RWPE1 (cell line): ENCODE measurements at regions of chrX and their contacts with region 1.

Region 1: DNA sequence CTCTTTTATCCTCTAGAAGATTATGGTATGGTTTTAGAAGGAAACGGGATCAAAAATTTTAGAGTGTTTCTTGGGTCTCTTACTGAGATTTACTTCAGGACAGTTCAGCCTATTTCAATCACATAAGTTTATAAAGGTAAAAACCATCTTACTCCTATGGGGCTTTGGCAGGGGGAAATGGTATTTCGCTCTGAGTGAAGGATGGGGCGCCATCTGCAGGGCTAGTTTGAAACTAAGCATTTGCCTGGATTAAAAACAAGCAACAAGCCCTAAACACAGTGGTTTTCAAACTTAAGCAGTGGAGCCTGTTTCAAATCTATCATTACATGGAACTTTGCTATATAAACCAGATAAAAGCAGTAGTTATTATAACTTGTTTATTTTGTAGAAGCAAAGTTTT is 361.5 kb upstream of the FMR1 start:
- DNase-seq: no peak
- H3K27ac ChIP-seq: no peak overlapping the region
- CTCF ChIP-seq: no peak

Region 2: GRCh38 chrX:147333821-147334220 is 216.4 kb before region 1 on chrX:
- CTCF ChIA-PET with region 1: no interaction called
- POLR2A ChIA-PET with region 1: no interaction called
- DNase-seq: no peak
- H3K27ac ChIP-seq: no peak overlapping the region
- CTCF ChIP-seq: no peak

Region 3: GRCh38 chrX:147602176-147602696 is 52.0 kb after region 1 on chrX:
- CTCF ChIA-PET with region 1: interaction called, 11 read pairs
- POLR2A ChIA-PET with region 1: no interaction called
- DNase-seq: no peak
- H3K27ac ChIP-seq: no peak overlapping the region
- CTCF ChIP-seq: no peak